ENCODE measurements at regions of chr6 and their contacts with region 1.

Region 1: DNA sequence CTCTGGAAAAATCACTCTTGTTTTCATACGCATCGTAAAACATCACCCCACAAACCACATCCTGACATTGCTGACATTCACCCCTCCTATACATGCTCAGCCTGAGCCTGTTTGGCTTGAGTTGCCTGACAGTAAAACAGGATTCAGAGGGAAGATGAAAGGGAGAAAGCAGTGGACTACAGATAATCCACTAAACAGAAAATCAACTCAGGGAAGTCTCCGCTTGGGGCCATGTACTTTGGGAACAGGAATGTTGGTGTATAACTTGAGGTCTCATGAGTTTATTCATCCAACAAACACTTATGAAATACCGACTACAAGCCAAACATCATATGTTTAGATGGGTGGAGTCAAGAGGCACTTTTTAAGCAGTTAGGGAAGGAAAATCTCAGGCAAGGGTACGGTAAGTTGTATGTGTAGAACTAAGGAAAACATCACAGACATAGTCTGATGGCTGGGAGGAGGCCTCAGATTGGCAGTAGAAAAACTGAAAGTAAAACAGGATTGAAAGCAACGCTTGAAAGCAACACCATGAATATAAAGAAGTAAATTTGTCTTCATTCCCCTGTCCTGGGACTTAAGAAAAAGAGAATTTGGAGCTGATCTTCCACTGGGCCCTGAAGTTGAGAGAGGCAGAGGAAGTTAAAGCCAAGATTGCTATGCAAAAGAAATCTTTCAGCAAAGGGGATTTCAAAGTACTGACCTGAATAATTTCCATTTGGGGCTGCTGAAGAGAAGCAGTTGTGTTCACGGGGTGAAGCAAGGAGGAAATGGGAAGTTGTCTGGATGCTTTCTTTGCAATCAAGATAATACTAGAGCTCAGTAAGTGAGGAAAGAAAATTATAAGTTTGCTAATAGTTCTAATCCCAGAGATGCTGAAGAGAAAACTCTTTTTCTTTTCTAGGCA is 28.8 kb downstream of the PDE7B start:
- DNase-seq: peak; percentile 9 to 88 (median 42)
- ATAC-seq: peak; percentile 86
- H3K4me3 ChIP-seq: peak overlapping the region; percentile 47
- H3K4me3 Mint-ChIP-seq: peak overlapping the region; percentile 82
- H3K27ac ChIP-seq: peak overlapping the region; percentile 69 to 91
- H3K27ac Mint-ChIP-seq: peak overlapping the region; percentile 94
- H3K4me1 ChIP-seq: peaks cover 12% of the 10 kb centered on the region
- H3K4me1 Mint-ChIP-seq: peaks cover 69% of the 10 kb centered on the region
- H3K27me3 ChIP-seq: no peaks in the 10 kb centered on the region
- H3K27me3 Mint-ChIP-seq: no peaks in the 10 kb centered on the region
- CTCF ChIP-seq: no peak

Region 2: GRCh38 chr6:135851442-135852271 is 28.7 kb before region 1 on chr6 and contains the start of gene PDE7B:
- CTCF ChIA-PET with region 1: interaction called, 3 read pairs
- POLR2A ChIA-PET with region 1: interaction called, 12 read pairs
- intact Hi-C with region 1: loop called (anchors 1 to 5 kb)
- DNase-seq: peak in 13 of 14 experiments; percentile 2 to 73 (median 29)
- ATAC-seq: peak; percentile 83
- H3K4me3 ChIP-seq: peak within 1 kb of the TSS; percentile 45
- H3K4me3 Mint-ChIP-seq: peak within 1 kb of the TSS; percentile 87
- H3K27ac ChIP-seq: peak within 1 kb of the TSS; percentile 16 to 32
- H3K27ac Mint-ChIP-seq: peak within 1 kb of the TSS; percentile 81
- H3K4me1 ChIP-seq: peaks cover 18% of the 10 kb centered on the region
- H3K4me1 Mint-ChIP-seq: peaks cover 26% of the 10 kb centered on the region
- H3K27me3 ChIP-seq: no peaks in the 10 kb centered on the region
- H3K27me3 Mint-ChIP-seq: no peaks in the 10 kb centered on the region
- CTCF ChIP-seq: no peak
- total RNA-seq, gene PDE7B: 0.25 to 0.34 TPM

Region 3: DNA sequence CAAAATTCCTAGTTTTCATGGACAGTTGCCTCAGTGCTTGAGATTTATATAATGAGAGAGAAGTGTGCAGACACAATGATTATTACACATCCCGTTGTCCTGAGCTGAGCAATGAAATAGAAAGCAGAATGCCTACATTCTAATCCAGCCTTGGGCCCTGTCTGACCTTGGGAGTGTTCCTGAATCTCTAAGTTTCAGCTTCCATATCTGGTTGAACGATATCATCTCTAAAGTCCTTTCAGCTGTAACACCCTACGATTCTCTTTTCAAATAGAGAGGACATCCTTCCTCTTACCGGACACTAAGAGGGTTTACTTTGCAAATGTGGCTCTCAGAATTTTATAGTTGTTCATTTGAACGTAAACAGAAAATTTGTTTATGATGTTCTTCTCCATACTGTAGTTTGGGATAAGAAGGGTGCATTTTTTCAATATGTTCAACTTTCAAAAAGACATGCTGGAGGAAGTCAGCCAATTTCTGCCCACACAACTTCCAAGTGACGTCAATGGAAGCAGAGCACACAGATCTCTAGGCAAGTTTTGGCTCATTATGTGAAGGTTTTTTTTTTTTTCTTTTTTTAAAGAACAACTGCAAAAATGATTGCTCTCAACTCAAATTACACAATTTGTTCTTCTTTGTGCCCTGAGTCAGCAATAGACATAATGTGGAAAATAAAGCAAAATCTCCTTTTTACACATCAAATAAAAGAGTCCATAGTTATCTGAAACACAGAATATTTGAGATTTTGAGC is 21.6 kb after region 1 on chr6:
- CTCF ChIA-PET with region 1: interaction called, 3 read pairs
- POLR2A ChIA-PET with region 1: interaction called, 5 read pairs
- intact Hi-C with region 1: loop called in 1 of 2 experiments (anchors 1 kb)
- DNase-seq: peak in 4 of 14 experiments; percentile 10 to 53 (median 48)
- ATAC-seq: peak; percentile 85
- H3K4me3 ChIP-seq: no peak overlapping the region
- H3K4me3 Mint-ChIP-seq: no peak overlapping the region
- H3K27ac ChIP-seq: no peak overlapping the region
- H3K27ac Mint-ChIP-seq: peak overlapping the region; percentile 35
- H3K4me1 ChIP-seq: no peaks in the 10 kb centered on the region
- H3K4me1 Mint-ChIP-seq: peaks cover 31% of the 10 kb centered on the region
- H3K27me3 ChIP-seq: no peaks in the 10 kb centered on the region
- H3K27me3 Mint-ChIP-seq: no peaks in the 10 kb centered on the region
- CTCF ChIP-seq: no peak